ENCODE measurements at regions of chrX and their contacts with region 1.

Region 1: GRCh38 chrX:121146059-121146628 is 98.7 kb downstream of the GLUD2 start:
- DNase-seq: no peak

Region 2: DNA sequence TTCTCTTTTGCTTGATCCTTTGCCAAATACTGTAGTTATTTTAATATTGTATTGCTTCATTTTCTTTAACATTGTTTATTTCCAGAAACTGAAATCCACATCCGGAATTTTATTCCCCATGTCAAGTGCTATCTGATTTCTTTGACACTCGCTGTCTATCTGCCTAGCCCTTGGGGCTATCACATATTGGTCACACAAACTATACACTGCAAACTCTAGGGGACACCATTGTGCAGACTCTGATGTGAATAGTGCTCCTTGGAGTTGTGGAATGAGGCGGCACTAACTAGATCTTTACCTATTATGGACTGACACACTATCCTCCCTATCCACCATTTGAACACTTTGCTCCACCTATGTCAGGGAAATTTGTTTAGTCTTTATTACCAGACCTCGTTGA is 435.7 kb after region 1 on chrX:
- intact Hi-C with region 1: loop called (anchors 5 kb)
- DNase-seq: no peak

Measured in posterior cingulate gyrus (tissue), 11 donors.